Activated B cell treated with CpG ODN at 0.5 μM for 24 hours (primary cell): ENCODE measurements at regions of chr2 and their contacts with region 1.

Region 1: GRCh38 chr2:105576440-105577252 is 168.1 kb upstream of the NCK2 start:
- DNase-seq: no peak
- ATAC-seq: peak; percentile 40
- H3K4me3 Mint-ChIP-seq: no peak overlapping the region
- H3K27ac Mint-ChIP-seq: peak overlapping the region; percentile 60
- H3K4me1 Mint-ChIP-seq: peaks cover 7% of the 10 kb centered on the region
- H3K27me3 Mint-ChIP-seq: peaks cover 14% of the 10 kb centered on the region
- CTCF ChIP-seq: peak; percentile 33

Region 2: GRCh38 chr2:105502625-105503334 is 73.9 kb before region 1 on chr2:
- CTCF ChIA-PET with region 1: no interaction called
- POLR2A ChIA-PET with region 1: no interaction called
- intact Hi-C with region 1: no loop called
- DNase-seq: no peak
- ATAC-seq: no peak
- H3K4me3 Mint-ChIP-seq: no peak overlapping the region
- H3K27ac Mint-ChIP-seq: no peak overlapping the region
- H3K4me1 Mint-ChIP-seq: no peaks in the 10 kb centered on the region
- H3K27me3 Mint-ChIP-seq: peaks cover 12% of the 10 kb centered on the region
- CTCF ChIP-seq: no peak

Region 3: GRCh38 chr2:105789745-105790460 is 213.3 kb after region 1 on chr2:
- CTCF ChIA-PET with region 1: interaction called, 7 read pairs
- POLR2A ChIA-PET with region 1: no interaction called
- intact Hi-C with region 1: loop called (anchors 1 kb)
- DNase-seq: no peak
- ATAC-seq: peak; percentile 81
- H3K4me3 Mint-ChIP-seq: peak overlapping the region; percentile 64
- H3K27ac Mint-ChIP-seq: peak overlapping the region; percentile 84
- H3K4me1 Mint-ChIP-seq: peaks cover 90% of the 10 kb centered on the region
- H3K27me3 Mint-ChIP-seq: no peaks in the 10 kb centered on the region
- CTCF ChIP-seq: no peak

Region 4: DNA sequence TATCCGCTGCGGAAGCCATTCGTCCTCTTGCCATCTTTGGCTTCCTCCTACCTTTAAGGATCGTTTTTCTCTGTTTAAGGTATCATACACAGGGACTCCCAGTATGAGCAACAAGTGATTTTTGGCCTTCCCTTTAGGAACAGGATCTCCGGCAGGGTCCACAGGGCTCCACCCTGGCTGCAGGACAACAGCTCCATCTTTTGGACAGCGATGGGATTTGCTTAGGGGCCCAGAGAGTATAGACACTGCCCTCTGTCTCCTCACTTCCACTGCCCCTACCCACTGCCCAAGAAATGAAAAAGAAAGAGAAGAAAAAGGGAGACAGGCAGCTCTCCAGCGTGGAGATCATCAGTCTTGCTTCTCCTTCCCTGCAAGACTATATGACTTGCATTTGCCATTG is 392.9 kb after region 1 on chr2:
- CTCF ChIA-PET with region 1: no interaction called
- POLR2A ChIA-PET with region 1: no interaction called
- intact Hi-C with region 1: loop called (anchors 1 kb)
- DNase-seq: no peak
- ATAC-seq: no peak
- H3K4me3 Mint-ChIP-seq: no peak overlapping the region
- H3K27ac Mint-ChIP-seq: no peak overlapping the region
- H3K4me1 Mint-ChIP-seq: peaks cover 10% of the 10 kb centered on the region
- H3K27me3 Mint-ChIP-seq: peaks cover 2% of the 10 kb centered on the region
- CTCF ChIP-seq: no peak

Region 5: DNA sequence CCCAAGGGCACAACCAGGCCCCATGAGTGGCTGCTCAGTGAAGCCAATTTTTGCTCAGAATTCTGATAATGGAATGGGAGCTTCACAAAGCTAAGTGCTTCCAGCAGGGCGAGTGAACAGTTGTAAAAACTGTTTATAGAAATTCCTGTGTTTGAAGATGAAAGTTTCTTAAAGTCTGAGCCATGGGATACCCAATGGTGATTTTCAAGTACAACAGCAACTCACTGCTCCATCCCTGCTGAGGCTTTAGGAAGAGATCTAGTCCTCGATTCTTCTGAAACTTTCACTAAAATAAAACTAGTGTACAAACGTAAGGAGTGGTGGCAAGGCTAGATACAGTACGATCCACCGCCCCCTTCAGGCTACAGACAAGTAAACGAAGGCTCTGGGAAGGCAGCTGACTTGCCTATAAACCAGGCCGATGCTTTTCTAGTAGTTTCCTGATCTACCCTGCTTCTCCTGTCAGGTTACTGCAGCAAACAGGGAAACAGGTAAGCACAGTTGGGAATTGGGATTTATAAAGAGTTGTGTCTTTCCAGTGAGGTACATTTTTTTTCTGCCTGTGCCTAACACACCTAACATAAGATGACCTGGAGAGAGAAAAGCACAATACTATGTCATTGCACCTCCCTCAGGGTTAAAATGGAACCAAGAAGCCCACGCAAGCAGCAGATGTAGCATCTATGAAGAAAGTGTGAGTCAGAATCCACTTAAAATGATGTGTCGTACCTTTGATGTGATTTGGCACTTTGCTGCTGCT is 508.7 kb after region 1 on chr2:
- CTCF ChIA-PET with region 1: interaction called, 10 read pairs
- POLR2A ChIA-PET with region 1: no interaction called
- intact Hi-C with region 1: loop called (anchors 1 kb)
- DNase-seq: no peak
- ATAC-seq: peak; percentile 31
- H3K4me3 Mint-ChIP-seq: no peak overlapping the region
- H3K27ac Mint-ChIP-seq: no peak overlapping the region
- H3K4me1 Mint-ChIP-seq: peaks cover 20% of the 10 kb centered on the region
- H3K27me3 Mint-ChIP-seq: no peaks in the 10 kb centered on the region
- CTCF ChIP-seq: no peak

Region 6: GRCh38 chr2:106542811-106543259 is 966.2 kb after region 1 on chr2:
- CTCF ChIA-PET with region 1: interaction called, 3 read pairs
- POLR2A ChIA-PET with region 1: no interaction called
- intact Hi-C with region 1: loop called (anchors 1 kb)
- DNase-seq: peak; percentile 66
- ATAC-seq: peak; percentile 95
- H3K4me3 Mint-ChIP-seq: peak overlapping the region; percentile 58
- H3K27ac Mint-ChIP-seq: no peak overlapping the region
- H3K4me1 Mint-ChIP-seq: peaks cover 2% of the 10 kb centered on the region
- H3K27me3 Mint-ChIP-seq: peaks cover 21% of the 10 kb centered on the region
- CTCF ChIP-seq: peak; percentile 98